ENCODE measurements at regions of chr19 and their contacts with region 1.

Region 1: DNA sequence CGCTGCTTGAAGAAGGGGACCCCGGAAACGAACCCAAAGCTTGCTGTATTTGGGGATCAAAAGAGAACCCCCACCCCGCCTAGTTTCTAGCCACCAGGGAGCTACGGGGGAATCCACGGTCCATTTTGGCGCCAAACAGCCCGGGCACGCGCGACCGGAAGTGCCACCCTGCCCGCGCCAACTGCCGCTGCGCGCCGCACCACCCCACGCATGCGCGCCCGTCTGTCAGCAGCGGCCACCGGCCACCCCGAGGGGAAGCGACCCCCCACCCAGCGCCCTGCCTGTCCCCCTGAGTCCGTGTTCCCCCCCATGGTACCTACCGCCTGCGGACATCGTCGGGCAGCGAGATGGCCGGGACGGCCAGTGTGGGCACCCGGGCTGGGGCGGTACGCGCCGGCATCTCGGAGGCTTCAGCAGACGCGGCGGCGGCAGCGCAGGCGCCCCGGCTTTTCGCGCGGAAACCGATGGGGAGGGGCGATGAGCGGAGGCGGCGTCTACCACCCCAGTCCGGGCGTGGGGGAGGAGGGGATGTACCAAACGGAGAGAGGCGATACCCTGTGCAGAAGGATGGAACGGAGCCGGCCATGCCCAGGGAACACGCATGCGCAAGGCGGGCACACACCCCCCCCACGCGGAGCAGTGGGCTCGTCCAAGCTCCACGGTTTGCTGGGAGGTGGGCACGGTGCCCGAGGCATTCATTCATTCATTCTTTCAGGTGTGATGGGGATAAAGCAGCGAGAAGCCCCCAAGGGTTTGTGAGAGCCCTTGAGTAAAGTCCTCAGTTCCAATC is at the start of gene DNMT1:
- DNase-seq: peak; percentile 98
- H3K4me3 Mint-ChIP-seq: peak within 1 kb of the TSS; percentile 97
- H3K27ac Mint-ChIP-seq: peak within 1 kb of the TSS; percentile 96
- H3K4me1 Mint-ChIP-seq: peaks cover 29% of the 10 kb centered on the region
- H3K27me3 Mint-ChIP-seq: no peaks in the 10 kb centered on the region
- total RNA-seq, gene DNMT1: 367 and 370 TPM in 2 replicates

Region 2: DNA sequence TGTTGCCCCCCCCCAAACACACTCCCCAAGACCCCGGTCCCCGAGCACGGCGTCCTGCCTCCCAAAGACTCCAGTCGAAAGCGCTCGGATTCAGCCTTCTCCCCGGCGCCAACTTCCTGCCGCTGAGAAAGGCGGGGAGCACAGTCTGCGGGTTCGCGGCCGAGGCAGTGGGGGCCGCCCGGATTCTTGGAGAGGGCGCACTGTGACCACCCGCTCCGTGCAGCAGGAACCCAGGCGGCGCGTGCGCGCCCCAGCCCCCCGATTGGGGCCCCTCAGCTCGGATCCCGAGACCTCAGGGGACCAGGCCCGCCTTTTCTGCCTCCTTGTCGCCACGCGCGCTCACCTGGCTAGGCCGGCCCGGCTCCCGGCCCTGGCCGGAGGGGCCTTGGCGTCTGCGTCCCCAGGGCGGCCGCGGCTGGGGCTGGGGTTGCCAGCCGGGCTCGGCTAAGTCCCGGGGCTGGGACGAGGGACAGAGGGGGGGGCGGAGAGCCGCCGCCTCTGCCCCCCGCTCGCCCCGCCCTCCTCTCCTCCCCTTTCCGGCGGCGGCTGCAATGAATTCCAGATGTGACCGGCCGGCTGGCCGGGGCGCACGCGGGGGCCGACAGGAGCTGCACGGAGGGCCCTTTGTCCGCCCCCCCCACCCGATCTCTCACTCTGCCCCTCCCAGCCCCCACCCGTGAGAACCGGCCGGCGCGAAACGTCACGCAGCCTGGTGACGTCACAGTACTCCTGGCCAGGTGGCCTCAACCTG is 36.3 kb after region 1 on chr19 and contains the start of gene S1PR2:
- intact Hi-C with region 1: loop called (anchors 2 kb)
- DNase-seq: peak; percentile 51
- H3K4me3 Mint-ChIP-seq: peak within 1 kb of the TSS; percentile 83
- H3K27ac Mint-ChIP-seq: peak within 1 kb of the TSS; percentile 62
- H3K4me1 Mint-ChIP-seq: peaks cover 16% of the 10 kb centered on the region
- H3K27me3 Mint-ChIP-seq: no peaks in the 10 kb centered on the region
- total RNA-seq, gene S1PR2: 10.1 and 10.8 TPM in 2 replicates